ENCODE measurements at regions of chr3 and their contacts with region 1.

Region 1: GRCh38 chr3:126982471-126983175 is at the start of gene PLXNA1:
- DNase-seq: peak; percentile 87
- H3K4me3 ChIP-seq: peak within 1 kb of the TSS; percentile 65
- H3K27ac ChIP-seq: peak within 1 kb of the TSS; percentile 47
- H3K4me1 ChIP-seq: peaks cover 15% of the 10 kb centered on the region
- CTCF ChIP-seq: peak; percentile 88
- total RNA-seq, gene PLXNA1: 3.8 and 4.4 TPM in 2 replicates

Region 2: GRCh38 chr3:126442094-126442855 is 540.3 kb before region 1 on chr3:
- CTCF ChIA-PET with region 1: no interaction called
- POLR2A ChIA-PET with region 1: no interaction called
- intact Hi-C with region 1: no loop called
- DNase-seq: no peak
- H3K4me3 ChIP-seq: no peak overlapping the region
- H3K27ac ChIP-seq: no peak overlapping the region
- H3K4me1 ChIP-seq: no peaks in the 10 kb centered on the region
- CTCF ChIP-seq: no peak

Region 3: GRCh38 chr3:126679318-126679751 is 303.3 kb before region 1 on chr3:
- CTCF ChIA-PET with region 1: no interaction called
- POLR2A ChIA-PET with region 1: no interaction called
- intact Hi-C with region 1: loop called (anchors 1 kb)
- DNase-seq: peak; percentile 74
- H3K4me3 ChIP-seq: peak overlapping the region; percentile 34
- H3K27ac ChIP-seq: peak overlapping the region; percentile 38
- H3K4me1 ChIP-seq: peaks cover 27% of the 10 kb centered on the region
- CTCF ChIP-seq: peak; percentile 88

Region 4: DNA sequence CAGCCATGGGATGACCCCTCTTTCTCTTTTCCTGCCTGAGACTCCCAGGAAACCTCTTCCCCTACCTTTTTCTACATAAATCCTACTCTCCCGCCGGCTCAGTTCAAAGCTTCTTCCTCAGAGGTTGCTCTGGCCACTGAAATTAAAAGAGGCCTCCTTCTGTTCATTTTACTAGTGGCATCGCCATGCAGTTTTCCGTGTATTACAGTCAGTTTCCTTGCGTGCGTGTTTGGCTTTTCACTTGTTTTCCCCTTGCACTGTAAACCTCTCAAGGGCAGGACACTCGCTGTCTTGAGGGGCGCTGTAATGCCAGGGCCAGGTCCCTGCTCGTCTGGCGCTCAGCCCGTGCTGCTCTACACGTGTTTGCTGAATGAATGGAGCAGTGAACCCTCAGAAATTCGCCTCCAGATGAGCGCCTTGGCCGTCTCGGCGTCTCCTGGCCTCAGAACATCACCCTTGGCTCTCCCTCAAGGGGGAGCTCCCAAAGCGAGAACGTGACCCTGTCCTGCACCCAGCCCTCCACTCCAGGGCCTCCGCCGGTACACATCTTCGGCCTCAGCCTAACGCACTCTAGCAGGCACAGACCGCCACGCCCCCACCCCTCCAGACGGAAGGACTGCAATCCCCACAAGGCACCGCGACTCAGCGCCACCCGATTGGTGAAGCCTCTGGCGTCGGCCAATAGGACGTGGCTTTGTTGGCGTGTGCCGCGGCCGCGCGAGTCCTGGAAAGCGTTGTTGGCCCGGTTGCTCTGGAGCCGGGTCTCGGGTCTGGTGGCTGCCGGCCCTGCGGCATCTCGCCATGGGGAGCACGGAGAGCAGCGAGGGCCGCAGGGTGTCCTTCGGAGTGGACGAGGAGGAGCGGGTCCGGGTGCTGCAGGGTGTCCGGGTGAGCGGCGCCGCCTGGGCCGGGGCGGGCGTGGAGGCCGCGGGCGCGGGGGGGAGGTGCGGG is 278.8 kb before region 1 on chr3 and contains the start of gene CHCHD6:
- CTCF ChIA-PET with region 1: no interaction called
- POLR2A ChIA-PET with region 1: no interaction called
- intact Hi-C with region 1: loop called (anchors 1 kb)
- DNase-seq: peak; percentile 97
- H3K4me3 ChIP-seq: peak within 1 kb of the TSS; percentile 86
- H3K27ac ChIP-seq: no peak within 1 kb of the TSS
- H3K4me1 ChIP-seq: peaks cover 16% of the 10 kb centered on the region
- CTCF ChIP-seq: peak; percentile 46; the same call in 1 of the 2 replicates
- total RNA-seq, gene CHCHD6: 19.8 and 21.2 TPM in 2 replicates

Region 5: GRCh38 chr3:126737531-126737930 is 245.1 kb before region 1 on chr3:
- CTCF ChIA-PET with region 1: no interaction called
- POLR2A ChIA-PET with region 1: no interaction called
- intact Hi-C with region 1: no loop called
- DNase-seq: no peak
- H3K4me3 ChIP-seq: no peak overlapping the region
- H3K27ac ChIP-seq: no peak overlapping the region
- H3K4me1 ChIP-seq: no peaks in the 10 kb centered on the region
- CTCF ChIP-seq: peak; percentile 58; the same call in 1 of the 2 replicates

Region 6: GRCh38 chr3:126752303-126752842 is 230.2 kb before region 1 on chr3:
- CTCF ChIA-PET with region 1: no interaction called
- POLR2A ChIA-PET with region 1: no interaction called
- intact Hi-C with region 1: loop called (anchors 1 kb)
- DNase-seq: peak; percentile 66
- H3K4me3 ChIP-seq: no peak overlapping the region
- H3K27ac ChIP-seq: no peak overlapping the region
- H3K4me1 ChIP-seq: no peaks in the 10 kb centered on the region
- CTCF ChIP-seq: peak; percentile 86

Region 7: GRCh38 chr3:126959921-126960603 is 22.6 kb before region 1 on chr3:
- CTCF ChIA-PET with region 1: interaction called, 4 read pairs
- POLR2A ChIA-PET with region 1: interaction called, 4 read pairs
- intact Hi-C with region 1: loop called (anchors 1 kb)
- DNase-seq: no peak
- H3K4me3 ChIP-seq: no peak overlapping the region
- H3K27ac ChIP-seq: no peak overlapping the region
- H3K4me1 ChIP-seq: peaks cover 24% of the 10 kb centered on the region
- CTCF ChIP-seq: no peak

Region 8: DNA sequence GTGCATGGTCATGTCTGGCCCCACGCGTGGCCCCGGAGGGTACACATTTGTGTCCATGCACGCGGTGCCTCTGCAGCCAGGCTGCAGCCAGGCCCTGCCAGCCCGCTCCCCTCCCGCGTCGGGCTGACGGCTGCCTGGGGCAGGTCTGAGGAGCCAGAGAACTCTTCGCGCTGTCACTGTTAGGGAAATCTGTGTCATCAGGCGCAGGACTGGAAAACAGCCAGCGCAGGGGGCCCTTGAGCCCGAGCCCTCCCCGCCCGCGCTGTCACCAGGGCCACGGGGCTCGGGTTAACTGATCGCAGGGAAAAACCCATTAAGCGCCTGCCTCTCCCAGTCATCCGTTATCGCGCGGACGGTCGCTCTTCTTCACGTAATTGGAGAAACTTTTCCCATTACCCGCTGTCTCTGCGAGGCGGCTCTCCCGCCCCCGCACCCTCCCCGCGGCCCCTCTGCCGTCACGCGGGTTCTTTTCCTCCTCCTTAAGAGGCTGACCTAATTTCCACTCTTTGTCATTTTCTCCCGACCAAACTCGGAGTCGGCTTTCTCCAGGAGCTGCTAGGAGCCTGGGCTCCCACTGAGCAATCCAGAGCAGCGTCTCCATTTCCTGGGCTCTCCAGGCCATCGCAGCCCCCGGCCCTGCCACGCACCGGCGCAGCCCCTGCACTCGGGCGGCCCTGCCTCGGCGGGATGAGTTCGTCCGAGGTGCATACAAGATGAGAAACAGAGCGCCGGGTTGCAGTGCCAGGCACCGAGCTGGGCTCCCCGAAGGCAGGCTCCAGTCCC is 152.8 kb after region 1 on chr3:
- CTCF ChIA-PET with region 1: no interaction called
- POLR2A ChIA-PET with region 1: no interaction called
- intact Hi-C with region 1: no loop called
- DNase-seq: no peak
- H3K4me3 ChIP-seq: no peak overlapping the region
- H3K27ac ChIP-seq: no peak overlapping the region
- H3K4me1 ChIP-seq: no peaks in the 10 kb centered on the region
- CTCF ChIP-seq: no peak

Region 9: DNA sequence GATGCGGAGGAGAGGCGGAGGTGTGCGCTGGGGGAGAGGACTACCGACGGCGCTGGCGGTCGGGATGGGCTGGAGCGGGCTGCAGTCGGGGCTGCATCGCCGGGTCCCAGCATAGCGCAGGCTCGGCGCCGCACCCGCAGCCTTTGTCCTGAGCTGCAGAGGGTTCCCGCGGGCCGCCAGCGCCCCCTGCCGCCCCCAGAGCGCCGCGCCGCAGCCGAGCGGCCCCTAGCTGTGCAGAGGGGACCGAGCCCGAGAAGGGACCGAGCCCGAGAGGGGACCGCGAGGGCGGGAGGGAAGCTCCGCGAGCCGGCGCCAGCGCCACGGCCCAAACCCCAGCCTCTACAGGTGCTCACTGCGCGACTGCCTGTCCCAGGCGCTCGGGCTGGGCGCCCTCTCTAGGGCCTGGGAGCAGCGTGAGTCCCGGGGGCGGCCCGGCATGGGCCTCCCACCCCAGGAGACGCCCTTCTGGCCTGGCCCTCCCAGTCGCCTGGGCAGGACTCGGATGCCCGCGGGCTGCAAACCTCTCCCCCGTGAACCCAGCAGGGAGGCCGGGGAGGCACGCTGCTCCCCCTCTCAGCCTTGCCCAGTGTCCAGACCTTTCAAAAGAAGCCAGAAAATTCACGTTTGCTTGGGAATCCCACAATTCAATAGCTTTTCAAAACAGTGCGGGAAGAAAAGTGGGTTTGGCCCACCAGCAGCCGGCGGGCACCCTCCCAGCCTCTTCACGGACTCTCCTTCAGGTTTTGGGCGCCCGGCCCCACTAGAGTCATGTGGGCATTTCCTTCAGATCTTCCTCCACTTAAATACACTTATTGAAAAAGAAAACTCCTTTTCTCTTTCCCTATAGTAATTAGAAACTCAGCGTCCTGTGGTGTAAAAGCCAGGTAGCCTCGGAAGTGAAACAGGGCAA is 473.2 kb after region 1 on chr3:
- CTCF ChIA-PET with region 1: no interaction called
- POLR2A ChIA-PET with region 1: no interaction called
- intact Hi-C with region 1: loop called (anchors 10 kb)
- DNase-seq: peak; percentile 21
- H3K4me3 ChIP-seq: no peak overlapping the region
- H3K27ac ChIP-seq: no peak overlapping the region
- H3K4me1 ChIP-seq: no peaks in the 10 kb centered on the region
- CTCF ChIP-seq: peak; percentile 81